Activated CD4-positive, alpha-beta T cell treated with anti-CD3 and anti-CD28 coated beads, Interleukin-2, amount 10 ng/mL, durations not matched to agents 24 days and 14 days (primary cell): ENCODE measurements at regions of chr14 and their contacts with region 1.

Region 1: DNA sequence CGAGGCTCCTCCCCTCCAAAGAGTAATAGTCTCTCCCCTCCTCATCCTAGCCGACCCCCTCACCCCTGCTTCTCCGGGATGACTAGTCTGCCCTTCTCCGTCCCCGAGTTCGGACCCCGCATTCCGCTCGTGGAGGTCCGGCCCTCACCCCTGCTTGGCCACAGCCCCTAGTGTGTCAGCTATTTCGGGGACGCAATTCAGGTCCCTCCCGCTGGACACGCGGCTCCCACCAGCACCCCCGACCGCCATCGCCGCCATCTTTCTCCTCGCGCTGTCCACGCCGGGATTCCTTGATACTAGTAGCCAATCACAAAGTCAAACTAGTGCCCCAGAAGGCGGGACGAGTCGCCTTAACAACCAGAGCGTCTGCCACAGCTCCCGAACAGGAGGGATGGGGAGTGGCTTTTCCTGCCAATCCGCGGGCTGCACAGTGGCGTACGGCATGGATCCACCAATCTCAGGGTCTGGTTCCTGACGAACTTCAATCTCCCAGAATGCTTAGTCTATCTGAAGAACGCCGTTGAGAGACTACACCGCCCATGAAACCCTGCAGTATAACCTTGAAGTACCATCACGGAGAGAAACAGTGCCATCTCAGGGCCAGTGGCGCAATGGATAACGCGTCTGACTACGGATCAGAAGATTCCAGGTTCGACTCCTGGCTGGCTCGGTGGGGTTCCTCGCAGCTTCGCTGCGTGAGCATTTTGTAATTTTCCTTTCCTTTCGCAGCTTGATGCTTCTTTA is at the start of gene PRMT5:
- DNase-seq: peak; percentile 99
- H3K4me3 Mint-ChIP-seq: no peak within 1 kb of the TSS
- H3K27ac Mint-ChIP-seq: no peak within 1 kb of the TSS
- H3K4me1 Mint-ChIP-seq: peaks cover 25% of the 10 kb centered on the region
- H3K27me3 Mint-ChIP-seq: no peaks in the 10 kb centered on the region
- total RNA-seq, gene PRMT5: 198 and 200 TPM in 2 replicates

Region 2: GRCh38 chr14:22886500-22887259 is 42.6 kb before region 1 on chr14:
- intact Hi-C with region 1: loop called (anchors 1 kb)
- DNase-seq: peak; percentile 90
- H3K4me3 Mint-ChIP-seq: peak overlapping the region; percentile 91
- H3K27ac Mint-ChIP-seq: peak overlapping the region; percentile 92
- H3K4me1 Mint-ChIP-seq: peaks cover 37% of the 10 kb centered on the region
- H3K27me3 Mint-ChIP-seq: peaks cover 8% of the 10 kb centered on the region

Region 3: DNA sequence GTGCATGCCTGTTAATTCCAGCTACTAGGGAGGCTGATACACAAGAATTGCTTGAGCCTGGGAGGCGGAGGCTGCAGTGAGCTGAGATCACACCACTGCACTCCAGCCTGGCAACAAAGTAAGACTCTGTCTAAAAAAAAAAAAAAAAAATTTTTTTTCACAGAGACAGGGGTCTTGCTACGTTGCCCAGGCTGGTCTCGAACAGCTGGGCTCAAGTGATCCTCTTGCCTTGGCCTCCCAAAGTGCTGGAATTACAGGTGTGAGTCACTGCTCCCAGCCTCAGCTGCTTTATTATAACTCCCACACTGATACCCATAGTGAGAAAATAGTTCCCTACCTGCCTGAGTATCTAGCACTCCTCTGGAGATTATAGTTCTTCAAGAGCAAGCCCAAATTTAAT is 16.4 kb after region 1 on chr14:
- intact Hi-C with region 1: no loop called
- DNase-seq: no peak
- H3K4me3 Mint-ChIP-seq: no peak overlapping the region
- H3K27ac Mint-ChIP-seq: no peak overlapping the region
- H3K4me1 Mint-ChIP-seq: no peaks in the 10 kb centered on the region
- H3K27me3 Mint-ChIP-seq: no peaks in the 10 kb centered on the region

Region 4: DNA sequence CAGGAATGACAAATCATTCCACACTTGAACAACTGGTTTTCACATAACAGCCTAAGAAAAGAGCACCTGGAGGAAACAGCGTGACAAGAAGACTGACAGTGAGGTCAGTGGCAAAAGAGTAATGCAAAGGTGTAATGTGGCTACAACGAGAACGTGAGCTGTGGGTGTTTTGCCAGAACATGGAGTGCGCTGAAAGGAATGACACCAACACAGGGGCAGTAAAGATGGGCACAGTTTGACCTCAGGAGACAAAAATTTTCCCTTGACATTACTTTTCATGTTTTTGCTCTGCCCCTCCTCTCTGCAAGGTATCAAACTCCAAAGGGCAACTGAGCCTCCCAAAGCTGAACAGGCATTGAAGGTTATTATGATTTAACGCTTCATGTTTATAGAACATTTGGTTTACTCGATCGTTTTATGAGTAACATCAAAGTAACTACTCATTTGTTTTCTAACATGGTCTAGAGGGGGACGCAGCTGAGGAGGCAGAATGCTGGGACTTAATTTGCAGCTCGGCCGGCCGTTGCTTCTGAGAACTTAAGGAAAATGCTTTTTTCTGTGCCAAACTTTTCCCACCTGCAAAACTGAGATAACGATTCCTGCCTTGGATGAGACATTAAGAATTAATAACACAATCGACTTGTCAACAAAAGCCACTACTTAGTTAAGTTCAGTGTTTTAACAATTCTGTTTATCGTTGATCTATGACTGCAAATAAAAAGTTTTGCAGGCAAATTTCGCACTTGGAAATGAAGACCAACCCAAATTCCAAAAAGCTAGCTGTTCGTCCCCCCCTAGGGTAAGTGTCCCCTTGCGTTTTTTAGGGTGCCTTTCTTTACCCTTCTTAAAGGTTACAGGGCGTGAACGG is 26.7 kb after region 1 on chr14:
- intact Hi-C with region 1: loop called (anchors 1 kb)
- DNase-seq: no peak
- H3K4me3 Mint-ChIP-seq: peak overlapping the region; percentile 95
- H3K27ac Mint-ChIP-seq: peak overlapping the region; percentile 92
- H3K4me1 Mint-ChIP-seq: peaks cover 19% of the 10 kb centered on the region
- H3K27me3 Mint-ChIP-seq: peaks cover 3% of the 10 kb centered on the region

Region 5: GRCh38 chr14:23006544-23007419 is 77.5 kb after region 1 on chr14:
- intact Hi-C with region 1: loop called (anchors 1 kb)
- DNase-seq: peak; percentile 99
- H3K4me3 Mint-ChIP-seq: peak overlapping the region; percentile 92
- H3K27ac Mint-ChIP-seq: peak overlapping the region; percentile 95
- H3K4me1 Mint-ChIP-seq: peaks cover 36% of the 10 kb centered on the region
- H3K27me3 Mint-ChIP-seq: no peaks in the 10 kb centered on the region

Region 6: DNA sequence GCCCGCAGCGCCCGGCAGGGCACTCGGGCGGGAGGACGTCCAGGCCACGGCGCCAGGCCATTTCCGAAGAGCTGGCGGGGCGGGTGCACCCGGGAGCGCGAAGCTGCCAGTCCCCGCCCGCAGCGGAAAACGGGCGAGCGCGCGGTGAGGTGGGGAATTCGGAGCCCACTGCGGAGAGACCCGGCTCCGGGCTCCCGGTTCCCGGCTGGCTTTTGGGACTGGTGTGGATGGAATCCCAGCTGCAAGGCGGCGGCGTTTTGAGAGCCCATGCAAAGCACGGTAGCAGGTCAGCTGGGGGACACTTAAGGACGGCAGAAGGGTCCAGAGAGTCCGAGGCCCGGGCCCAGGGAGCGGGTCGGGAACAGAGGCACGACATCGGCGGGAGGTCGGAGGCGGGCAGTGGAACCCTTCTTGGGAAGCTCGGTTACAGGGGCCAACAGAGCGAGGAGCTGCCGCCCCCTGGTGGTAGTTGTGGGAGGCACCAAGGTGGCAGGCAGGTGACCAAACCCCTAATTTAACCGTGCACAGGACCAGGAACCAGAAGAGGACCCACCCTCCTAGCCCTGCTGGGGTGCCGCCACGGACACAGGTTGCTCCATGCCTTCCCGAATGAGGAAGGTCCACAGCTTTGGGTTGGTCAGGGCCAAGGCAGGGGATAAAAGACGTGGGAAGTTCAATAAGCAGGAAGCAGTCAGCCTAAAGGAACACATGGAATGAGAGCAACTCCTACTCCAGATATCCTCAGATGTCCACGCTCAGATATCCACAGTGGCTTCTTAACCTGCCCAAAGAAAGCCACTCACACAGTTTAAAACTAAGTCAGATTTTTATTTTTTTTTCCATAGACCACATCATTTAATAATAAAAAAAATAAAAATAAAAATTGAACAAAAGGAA is 128.7 kb after region 1 on chr14:
- intact Hi-C with region 1: loop called (anchors 2 kb)
- DNase-seq: peak; percentile 96
- H3K4me3 Mint-ChIP-seq: peak overlapping the region; percentile 85
- H3K27ac Mint-ChIP-seq: peak overlapping the region; percentile 57
- H3K4me1 Mint-ChIP-seq: peaks cover 17% of the 10 kb centered on the region
- H3K27me3 Mint-ChIP-seq: peaks cover 8% of the 10 kb centered on the region